ENCODE measurements at regions of chr12 and their contacts with region 1.

Region 1: GRCh38 chr12:8493084-8493483 is 20.2 kb upstream of the CLEC4D start:
- DNase-seq: no peak

Region 2: GRCh38 chr12:7411343-7411742 is 1081.7 kb before region 1 on chr12:
- intact Hi-C with region 1: no loop called
- DNase-seq: no peak

Region 3: DNA sequence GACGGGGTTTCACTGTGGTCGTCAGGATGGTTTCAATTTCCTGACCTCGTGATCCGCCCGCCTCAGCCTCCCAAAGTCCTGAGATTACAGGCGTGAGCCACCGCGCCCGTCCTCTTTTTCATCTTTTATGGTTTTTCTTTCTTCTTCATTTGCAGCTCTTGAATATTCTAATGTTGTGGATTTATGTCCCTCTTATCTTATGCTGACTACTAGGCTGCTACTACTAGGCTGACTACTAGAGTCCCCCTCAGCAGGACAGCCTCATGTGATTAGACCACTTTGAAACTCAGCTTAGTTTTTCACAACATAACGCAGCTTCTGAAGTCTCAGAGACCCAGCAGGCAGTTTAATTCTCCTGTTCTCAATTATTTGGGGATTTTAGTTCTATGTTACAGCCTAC is 48.5 kb after region 1 on chr12:
- intact Hi-C with region 1: loop called in 1 of 2 experiments (anchors 1 kb)
- DNase-seq: no peak

Region 4: GRCh38 chr12:8603856-8604255 is 110.8 kb after region 1 on chr12:
- intact Hi-C with region 1: no loop called
- DNase-seq: no peak

Region 5: DNA sequence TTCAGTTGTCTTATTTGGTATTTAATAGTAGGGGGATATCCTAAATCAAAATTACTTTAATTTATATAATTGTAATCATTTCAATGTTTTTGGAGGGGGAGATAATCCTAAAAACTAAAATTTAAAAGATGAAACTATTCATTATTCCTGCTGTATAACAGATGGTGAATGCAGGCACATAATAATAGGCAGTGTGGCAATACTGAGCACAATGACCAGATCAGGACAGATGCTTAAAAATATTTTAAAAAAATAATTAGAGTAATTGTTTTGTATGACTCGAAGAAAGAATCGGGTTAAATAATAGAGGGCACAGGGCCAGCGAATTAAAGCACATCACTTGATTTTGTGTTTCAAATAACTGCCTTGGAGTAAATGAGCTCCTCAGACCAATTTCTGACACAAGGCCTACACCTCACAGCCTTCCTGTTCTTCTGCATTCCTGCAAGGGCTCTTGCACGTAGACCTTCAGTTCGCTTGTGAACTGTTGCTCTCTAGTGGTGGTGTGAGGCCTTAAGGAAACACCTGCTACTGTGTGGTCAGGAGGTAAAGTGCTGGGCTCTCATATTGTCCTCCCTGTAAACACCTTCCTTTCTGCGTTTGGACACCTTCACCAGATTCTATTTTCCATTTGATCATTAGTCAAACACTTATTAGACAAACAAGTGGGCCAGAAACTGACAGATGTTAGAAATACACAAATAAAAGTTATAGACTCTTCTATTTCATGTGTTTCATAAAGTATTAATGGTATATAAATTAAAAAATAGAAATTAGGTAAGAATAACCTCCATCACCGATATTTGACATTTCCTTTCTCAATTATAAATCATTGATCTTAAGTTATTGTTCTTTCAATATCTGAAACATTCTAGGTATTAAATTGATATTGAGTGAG is 1304.9 kb after region 1 on chr12:
- intact Hi-C with region 1: no loop called
- DNase-seq: no peak

Measured in posterior vena cava (tissue), 2 donors.